ENCODE measurements at regions of chr9 and their contacts with region 1.

Region 1: DNA sequence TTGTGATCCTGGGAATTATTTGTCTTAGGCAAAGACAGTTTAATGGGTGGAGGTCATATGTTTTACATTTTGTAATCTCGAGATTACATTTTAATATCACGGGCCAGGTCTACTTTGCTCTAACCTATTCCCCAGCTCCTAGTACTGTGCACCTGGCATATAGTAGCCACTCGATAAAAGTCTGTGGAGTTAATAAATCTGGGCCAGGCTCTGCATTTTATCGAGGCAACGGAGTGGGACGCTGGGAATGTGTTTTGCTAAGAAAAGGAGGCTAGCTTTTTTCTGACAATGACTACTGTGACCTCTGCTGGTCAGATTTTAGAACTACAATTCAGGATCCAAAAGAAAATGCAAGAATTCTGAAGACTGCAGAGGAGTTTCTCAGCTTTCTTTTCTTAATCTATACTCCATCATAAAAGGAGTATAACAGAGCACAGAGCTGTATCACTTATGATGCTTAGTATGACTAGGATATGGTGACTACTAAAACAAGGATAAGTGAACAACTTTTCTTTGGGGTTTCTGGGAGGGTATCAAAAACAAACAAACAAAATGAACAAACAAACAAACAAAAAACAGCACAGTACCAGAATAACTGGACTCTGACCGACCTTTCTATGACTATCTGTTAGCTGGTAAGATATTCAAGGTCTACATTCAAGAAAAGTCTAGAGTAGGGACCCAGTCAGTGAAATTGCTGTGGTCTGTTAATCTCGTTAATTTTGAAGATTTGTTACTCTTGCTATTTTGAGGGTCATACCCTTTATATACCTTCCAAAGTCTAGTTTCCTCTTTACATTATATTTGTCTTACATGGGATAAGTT is 46.1 kb upstream of the CER1 start:
- DNase-seq: peak in 2 of 9 experiments; percentile 31 to 42
- ATAC-seq: no peak
- H3K4me3 ChIP-seq: no peak overlapping the region
- H3K4me3 Mint-ChIP-seq: no peak overlapping the region
- H3K27ac ChIP-seq: no peak overlapping the region
- H3K27ac Mint-ChIP-seq: no peak overlapping the region
- H3K4me1 ChIP-seq: no peaks in the 10 kb centered on the region
- H3K4me1 Mint-ChIP-seq: no peaks in the 10 kb centered on the region
- H3K27me3 ChIP-seq: no peaks in the 10 kb centered on the region
- H3K27me3 Mint-ChIP-seq: peaks cover 10% of the 10 kb centered on the region
- CTCF ChIP-seq: peak; percentile 72

Region 2: GRCh38 chr9:13427587-13427986 is 1341.0 kb before region 1 on chr9:
- CTCF ChIA-PET with region 1: no interaction called
- POLR2A ChIA-PET with region 1: no interaction called
- intact Hi-C with region 1: loop called in 1 of 2 experiments (anchors 5 kb)
- DNase-seq: peak in 2 of 9 experiments; percentile 26 to 27
- ATAC-seq: no peak
- H3K4me3 ChIP-seq: no peak overlapping the region
- H3K4me3 Mint-ChIP-seq: no peak overlapping the region
- H3K27ac ChIP-seq: no peak overlapping the region
- H3K27ac Mint-ChIP-seq: no peak overlapping the region
- H3K4me1 ChIP-seq: no peaks in the 10 kb centered on the region
- H3K4me1 Mint-ChIP-seq: no peaks in the 10 kb centered on the region
- H3K27me3 ChIP-seq: no peaks in the 10 kb centered on the region
- H3K27me3 Mint-ChIP-seq: no peaks in the 10 kb centered on the region
- CTCF ChIP-seq: peak; percentile 53

Region 3: GRCh38 chr9:14277244-14277643 is 491.4 kb before region 1 on chr9:
- CTCF ChIA-PET with region 1: no interaction called
- POLR2A ChIA-PET with region 1: no interaction called
- intact Hi-C with region 1: no loop called
- DNase-seq: no peak
- ATAC-seq: no peak
- H3K4me3 ChIP-seq: no peak overlapping the region
- H3K4me3 Mint-ChIP-seq: no peak overlapping the region
- H3K27ac ChIP-seq: no peak overlapping the region
- H3K27ac Mint-ChIP-seq: no peak overlapping the region
- H3K4me1 ChIP-seq: no peaks in the 10 kb centered on the region
- H3K4me1 Mint-ChIP-seq: peaks cover 2% of the 10 kb centered on the region
- H3K27me3 ChIP-seq: no peaks in the 10 kb centered on the region
- H3K27me3 Mint-ChIP-seq: peaks cover 21% of the 10 kb centered on the region
- CTCF ChIP-seq: no peak

Region 4: GRCh38 chr9:14616188-14616982 is 152.2 kb before region 1 on chr9:
- CTCF ChIA-PET with region 1: interaction called, 7 read pairs
- POLR2A ChIA-PET with region 1: no interaction called
- intact Hi-C with region 1: loop called in 1 of 2 experiments (anchors 1 kb)
- DNase-seq: peak in 2 of 9 experiments; percentile 47 to 57
- ATAC-seq: no peak
- H3K4me3 ChIP-seq: no peak overlapping the region
- H3K4me3 Mint-ChIP-seq: no peak overlapping the region
- H3K27ac ChIP-seq: no peak overlapping the region
- H3K27ac Mint-ChIP-seq: no peak overlapping the region
- H3K4me1 ChIP-seq: no peaks in the 10 kb centered on the region
- H3K4me1 Mint-ChIP-seq: no peaks in the 10 kb centered on the region
- H3K27me3 ChIP-seq: no peaks in the 10 kb centered on the region
- H3K27me3 Mint-ChIP-seq: no peaks in the 10 kb centered on the region
- CTCF ChIP-seq: peak; percentile 65

Region 5: DNA sequence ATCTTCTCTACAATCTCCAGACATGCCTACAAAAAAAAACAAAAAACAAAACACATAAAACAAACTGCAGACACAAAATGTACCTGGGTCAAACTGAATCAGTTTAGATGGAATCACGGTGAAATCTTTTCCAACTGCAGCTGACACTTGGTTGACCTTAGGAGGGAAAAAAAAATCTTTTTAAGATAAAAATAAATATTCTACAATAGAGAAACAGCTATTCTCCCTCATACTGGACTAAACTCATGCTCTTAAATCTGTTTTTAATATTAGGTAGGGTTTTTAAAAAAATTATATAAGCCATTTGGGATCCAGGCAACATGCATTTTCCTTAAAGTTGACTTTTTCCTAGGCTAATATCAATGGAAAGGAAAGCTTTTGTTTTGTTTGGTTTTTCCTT is 12.3 kb before region 1 on chr9:
- CTCF ChIA-PET with region 1: interaction called, 10 read pairs
- POLR2A ChIA-PET with region 1: no interaction called
- intact Hi-C with region 1: no loop called
- DNase-seq: no peak
- ATAC-seq: no peak
- H3K4me3 ChIP-seq: no peak overlapping the region
- H3K4me3 Mint-ChIP-seq: no peak overlapping the region
- H3K27ac ChIP-seq: no peak overlapping the region
- H3K27ac Mint-ChIP-seq: no peak overlapping the region
- H3K4me1 ChIP-seq: no peaks in the 10 kb centered on the region
- H3K4me1 Mint-ChIP-seq: no peaks in the 10 kb centered on the region
- H3K27me3 ChIP-seq: peaks cover 0 to 5% of the 10 kb centered on the region in 2 experiments
- H3K27me3 Mint-ChIP-seq: peaks cover 10% of the 10 kb centered on the region
- CTCF ChIP-seq: no peak

Region 6: GRCh38 chr9:14797435-14797834 is 28.8 kb after region 1 on chr9:
- CTCF ChIA-PET with region 1: no interaction called
- POLR2A ChIA-PET with region 1: no interaction called
- intact Hi-C with region 1: no loop called
- DNase-seq: no peak
- ATAC-seq: no peak
- H3K4me3 ChIP-seq: no peak overlapping the region
- H3K4me3 Mint-ChIP-seq: no peak overlapping the region
- H3K27ac ChIP-seq: no peak overlapping the region
- H3K27ac Mint-ChIP-seq: no peak overlapping the region
- H3K4me1 ChIP-seq: no peaks in the 10 kb centered on the region
- H3K4me1 Mint-ChIP-seq: no peaks in the 10 kb centered on the region
- H3K27me3 ChIP-seq: no peaks in the 10 kb centered on the region
- H3K27me3 Mint-ChIP-seq: peaks cover 3% of the 10 kb centered on the region
- CTCF ChIP-seq: no peak